Heart left ventricle (tissue), 16 donors: ENCODE measurements at regions of chr17 and their contacts with region 1.

Region 1: GRCh38 chr17:65830356-65830755 is 268.9 kb upstream of the AXIN2 start:
- DNase-seq: no peak
- ATAC-seq: no peak
- H3K4me3 ChIP-seq: no peak overlapping the region
- H3K27ac ChIP-seq: no peak overlapping the region
- H3K4me1 ChIP-seq: no peaks in the 10 kb centered on the region
- H3K27me3 ChIP-seq: no peaks in the 10 kb centered on the region
- CTCF ChIP-seq: no peak
- POLR2A ChIP-seq: no peak

Region 2: DNA sequence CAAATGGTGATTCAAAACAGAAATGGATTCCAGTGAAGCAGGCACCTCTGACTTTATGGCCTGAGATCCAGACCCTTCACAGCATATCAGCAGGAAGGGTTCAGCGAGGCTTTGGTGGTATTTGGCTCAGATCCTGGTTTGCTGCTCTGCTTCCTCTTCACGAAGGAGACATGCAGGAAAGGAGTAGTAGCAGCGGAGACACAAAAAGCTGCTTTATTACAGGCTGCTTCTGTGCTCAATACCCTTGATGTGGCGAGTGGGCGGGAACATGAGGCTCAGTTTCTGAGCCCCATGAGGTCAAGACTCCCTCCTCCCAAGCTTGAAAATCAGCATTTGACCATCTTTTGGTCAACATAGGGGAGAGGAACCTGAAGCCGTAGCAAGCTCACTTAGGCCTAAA is 55.6 kb before region 1 on chr17:
- intact Hi-C with region 1: loop called in 1 of 10 experiments (anchors 10 kb)
- DNase-seq: no peak
- ATAC-seq: peak in 2 of 4 donors; percentile 9 to 33
- H3K4me3 ChIP-seq: no peak overlapping the region
- H3K27ac ChIP-seq: no peak overlapping the region
- H3K4me1 ChIP-seq: peaks cover 0 to 14% (median 0%) of the 10 kb centered on the region in 12 donors
- H3K27me3 ChIP-seq: no peaks in the 10 kb centered on the region
- CTCF ChIP-seq: no peak
- POLR2A ChIP-seq: no peak